Caco-2 (cell line): ENCODE measurements at regions of chr14 and their contacts with region 1.

Region 1: GRCh38 chr14:71647083-71647784 is 285.0 kb upstream of the RGS6 start:
- DNase-seq: peak; percentile 57 to 69
- H3K4me3 ChIP-seq: no peak overlapping the region
- H3K4me3 Mint-ChIP-seq: peak overlapping the region; percentile 24
- H3K27ac Mint-ChIP-seq: peak overlapping the region; percentile 19
- H3K4me1 ChIP-seq: peaks cover 22% of the 10 kb centered on the region
- H3K4me1 Mint-ChIP-seq: peaks cover 17% of the 10 kb centered on the region
- H3K27me3 ChIP-seq: no peaks in the 10 kb centered on the region
- H3K27me3 Mint-ChIP-seq: no peaks in the 10 kb centered on the region
- CTCF ChIP-seq: no peak

Region 2: DNA sequence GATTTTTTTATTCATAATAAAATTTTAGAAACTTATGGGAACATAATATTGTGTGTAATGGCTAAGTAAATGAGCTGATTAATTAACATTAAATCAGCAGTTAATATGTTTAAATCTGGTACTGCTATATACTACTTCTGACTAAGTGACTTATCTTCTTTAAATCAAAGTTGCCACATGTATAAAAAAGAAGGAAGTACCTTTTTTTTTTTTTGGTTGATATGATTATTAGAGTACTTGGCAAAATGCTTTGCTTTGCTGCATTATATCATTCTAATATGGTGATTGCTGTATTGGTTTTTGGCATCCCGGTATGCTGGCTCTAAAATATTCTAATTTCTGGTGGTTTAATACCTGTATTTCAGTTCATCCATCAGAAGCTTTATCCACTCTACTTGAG is 34.1 kb before region 1 on chr14:
- CTCF ChIA-PET with region 1: no interaction called
- POLR2A ChIA-PET with region 1: no interaction called
- intact Hi-C with region 1: no loop called
- DNase-seq: no peak
- H3K4me3 ChIP-seq: no peak overlapping the region
- H3K4me3 Mint-ChIP-seq: no peak overlapping the region
- H3K27ac Mint-ChIP-seq: no peak overlapping the region
- H3K4me1 ChIP-seq: no peaks in the 10 kb centered on the region
- H3K4me1 Mint-ChIP-seq: no peaks in the 10 kb centered on the region
- H3K27me3 ChIP-seq: no peaks in the 10 kb centered on the region
- H3K27me3 Mint-ChIP-seq: no peaks in the 10 kb centered on the region
- CTCF ChIP-seq: no peak

Region 3: GRCh38 chr14:71625891-71626701 is 21.1 kb before region 1 on chr14:
- CTCF ChIA-PET with region 1: no interaction called
- POLR2A ChIA-PET with region 1: no interaction called
- intact Hi-C with region 1: no loop called
- DNase-seq: no peak
- H3K4me3 ChIP-seq: no peak overlapping the region
- H3K4me3 Mint-ChIP-seq: no peak overlapping the region
- H3K27ac Mint-ChIP-seq: no peak overlapping the region
- H3K4me1 ChIP-seq: peaks cover 8% of the 10 kb centered on the region; the same call in 1 of the 2 replicates
- H3K4me1 Mint-ChIP-seq: peaks cover 16% of the 10 kb centered on the region
- H3K27me3 ChIP-seq: no peaks in the 10 kb centered on the region
- H3K27me3 Mint-ChIP-seq: no peaks in the 10 kb centered on the region
- CTCF ChIP-seq: no peak

Region 4: GRCh38 chr14:71686677-71687076 is 39.4 kb after region 1 on chr14:
- CTCF ChIA-PET with region 1: no interaction called
- POLR2A ChIA-PET with region 1: no interaction called
- intact Hi-C with region 1: loop called (anchors 2 kb)
- DNase-seq: no peak
- H3K4me3 ChIP-seq: no peak overlapping the region
- H3K4me3 Mint-ChIP-seq: no peak overlapping the region
- H3K27ac Mint-ChIP-seq: peak overlapping the region; percentile 57
- H3K4me1 ChIP-seq: peaks cover 45% of the 10 kb centered on the region
- H3K4me1 Mint-ChIP-seq: peaks cover 30% of the 10 kb centered on the region
- H3K27me3 ChIP-seq: no peaks in the 10 kb centered on the region
- H3K27me3 Mint-ChIP-seq: no peaks in the 10 kb centered on the region
- CTCF ChIP-seq: no peak